ENCODE measurements at regions of chr20 and their contacts with region 1.

Region 1: GRCh38 chr20:20010639-20011500 is 6.3 kb upstream of the NAA20 start:
- DNase-seq: peak; percentile 82
- H3K4me3 ChIP-seq: no peak overlapping the region
- H3K27me3 ChIP-seq: no peaks in the 10 kb centered on the region
- CTCF ChIP-seq: no peak

Region 2: DNA sequence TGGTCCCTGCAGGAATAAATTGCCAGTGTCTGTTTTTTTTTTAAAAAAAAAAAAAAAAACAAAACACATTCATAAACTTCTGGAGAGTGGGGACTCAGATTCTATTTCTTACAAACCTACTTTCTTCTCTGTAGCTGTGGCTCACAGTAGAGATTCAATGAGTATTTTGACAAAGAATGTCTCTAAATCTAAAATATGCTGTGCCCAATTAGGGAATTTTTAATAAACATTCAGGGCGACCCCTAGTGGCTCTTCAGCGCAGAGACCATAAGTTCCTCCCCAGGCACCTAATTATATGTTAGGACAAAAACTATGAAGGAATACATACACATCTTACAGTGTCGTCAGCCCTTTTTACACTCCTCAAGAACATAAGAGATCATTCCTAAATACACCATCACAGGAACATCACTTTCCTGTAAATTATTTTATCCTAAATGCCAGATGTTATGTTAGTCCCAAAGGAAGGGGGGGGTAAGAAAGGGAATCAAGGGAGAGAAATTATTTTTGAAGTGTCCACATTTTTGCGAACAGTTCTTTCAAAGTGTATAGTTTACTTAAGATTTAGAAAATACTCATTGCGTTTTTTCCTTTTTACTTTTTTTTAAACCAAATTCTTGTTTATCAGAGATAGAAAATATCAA is 15.5 kb before region 1 on chr20:
- CTCF ChIA-PET with region 1: interaction called, 12 read pairs
- POLR2A ChIA-PET with region 1: no interaction called
- DNase-seq: no peak
- H3K4me3 ChIP-seq: no peak overlapping the region
- H3K27me3 ChIP-seq: no peaks in the 10 kb centered on the region
- CTCF ChIP-seq: peak; percentile 80